CD8-positive, alpha-beta T cell (primary cell): ENCODE measurements at regions of chr9 and their contacts with region 1.

Region 1: DNA sequence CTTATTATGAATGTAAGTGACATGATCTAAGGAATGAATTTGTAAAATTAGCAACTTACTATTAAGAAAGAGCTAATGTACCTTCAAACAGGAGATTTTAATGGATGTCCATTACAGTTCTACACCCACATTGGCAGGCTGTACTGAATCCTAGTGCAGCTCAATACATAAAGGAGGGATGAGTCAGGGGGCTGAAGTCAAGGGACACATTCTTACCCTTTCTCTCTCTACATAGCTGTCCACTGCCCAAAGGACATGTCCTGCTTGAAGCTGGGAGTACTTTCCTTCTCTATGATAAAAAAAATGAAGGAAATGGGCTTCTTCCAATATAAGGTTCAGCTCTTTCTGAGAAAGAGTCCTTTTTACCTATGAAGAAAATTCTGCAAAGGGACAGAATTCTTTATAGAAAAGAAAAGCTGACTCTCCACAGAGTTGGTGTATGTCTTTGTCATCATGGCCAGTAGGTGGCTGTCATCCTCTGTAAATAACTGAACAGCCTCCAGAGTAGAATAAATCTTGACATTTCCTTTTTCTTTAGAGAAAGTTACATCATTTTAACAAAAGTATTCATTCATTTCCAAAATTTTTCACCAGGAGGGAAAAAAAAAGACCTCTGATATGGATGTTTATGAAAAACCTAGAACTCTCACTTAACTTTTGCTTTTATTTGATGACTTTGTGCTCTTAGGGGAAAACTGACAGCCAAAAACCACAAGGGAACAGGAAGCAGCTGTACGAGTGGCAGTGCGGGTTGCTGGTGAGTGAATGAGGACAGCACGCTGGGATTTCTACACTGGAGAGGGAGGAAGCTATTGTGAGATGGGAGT is 13.1 kb upstream of the IFNA14 start:
- DNase-seq: peak in 2 of 9 experiments; percentile 30 to 42
- ATAC-seq: peak; percentile 51
- H3K4me3 ChIP-seq: no peak overlapping the region
- H3K4me3 Mint-ChIP-seq: no peak overlapping the region
- H3K27ac ChIP-seq: no peak overlapping the region
- H3K27ac Mint-ChIP-seq: no peak overlapping the region
- H3K4me1 ChIP-seq: peaks cover 8% of the 10 kb centered on the region
- H3K4me1 Mint-ChIP-seq: peaks cover 5% of the 10 kb centered on the region
- H3K27me3 ChIP-seq: peaks cover 0 to 5% of the 10 kb centered on the region in 2 experiments
- H3K27me3 Mint-ChIP-seq: peaks cover 9% of the 10 kb centered on the region
- CTCF ChIP-seq: peak; percentile 66

Region 2: GRCh38 chr9:21239911-21240310 is 13.0 kb before region 1 on chr9 and contains the start of gene IFNA14:
- CTCF ChIA-PET with region 1: interaction called, 12 read pairs
- POLR2A ChIA-PET with region 1: interaction called, 3 read pairs
- intact Hi-C with region 1: no loop called
- DNase-seq: no peak
- ATAC-seq: no peak
- H3K4me3 ChIP-seq: no peak within 1 kb of the TSS
- H3K4me3 Mint-ChIP-seq: no peak within 1 kb of the TSS
- H3K27ac ChIP-seq: no peak within 1 kb of the TSS
- H3K27ac Mint-ChIP-seq: no peak within 1 kb of the TSS
- H3K4me1 ChIP-seq: no peaks in the 10 kb centered on the region
- H3K4me1 Mint-ChIP-seq: peaks cover 9% of the 10 kb centered on the region
- H3K27me3 ChIP-seq: no peaks in the 10 kb centered on the region
- H3K27me3 Mint-ChIP-seq: peaks cover 16% of the 10 kb centered on the region
- CTCF ChIP-seq: no peak
- total RNA-seq, gene IFNA14: not detected

Region 3: DNA sequence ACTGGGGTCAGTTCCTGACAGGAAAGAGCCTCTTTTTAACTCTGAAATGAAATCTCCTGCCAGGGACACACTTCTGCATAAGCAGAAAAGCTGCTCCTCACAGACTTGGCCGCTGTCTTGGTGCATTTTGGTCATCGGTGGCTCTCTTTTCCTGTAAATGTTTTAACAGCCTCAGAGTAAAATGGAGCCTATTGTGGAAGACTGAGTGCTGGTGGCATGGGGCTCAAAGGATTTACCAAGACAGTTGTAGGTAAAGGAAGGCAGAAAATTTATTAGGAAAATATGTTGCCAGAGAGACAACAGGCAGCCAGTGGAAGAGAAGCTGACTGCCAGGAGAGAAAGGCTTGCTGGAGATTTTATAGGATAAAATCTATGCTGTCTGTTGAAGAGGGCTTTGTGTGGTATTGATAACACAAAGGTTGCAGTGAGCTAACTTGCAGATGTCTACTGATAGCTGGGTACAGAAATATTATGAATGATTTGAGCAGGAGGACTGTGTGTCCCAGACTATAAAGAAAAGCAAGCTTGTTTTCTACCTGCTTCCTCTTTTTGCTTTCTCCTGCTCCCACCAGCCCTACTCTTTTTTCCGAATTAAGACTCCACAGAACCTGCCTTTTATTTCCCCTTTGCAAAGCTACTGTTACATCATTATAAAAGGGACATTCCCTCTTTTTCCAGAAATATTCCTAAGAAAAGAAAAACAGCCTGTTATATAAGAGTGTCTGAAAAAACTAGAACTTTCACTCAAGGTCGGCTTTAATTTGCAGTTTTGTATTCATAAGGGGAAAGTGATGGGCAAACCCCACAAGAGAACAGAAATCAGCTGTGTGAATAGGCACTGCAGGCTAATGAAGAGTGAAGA is 14.8 kb after region 1 on chr9:
- CTCF ChIA-PET with region 1: interaction called, 11 read pairs
- POLR2A ChIA-PET with region 1: no interaction called
- intact Hi-C with region 1: no loop called
- DNase-seq: no peak
- ATAC-seq: no peak
- H3K4me3 ChIP-seq: no peak overlapping the region
- H3K4me3 Mint-ChIP-seq: no peak overlapping the region
- H3K27ac ChIP-seq: no peak overlapping the region
- H3K27ac Mint-ChIP-seq: no peak overlapping the region
- H3K4me1 ChIP-seq: no peaks in the 10 kb centered on the region
- H3K4me1 Mint-ChIP-seq: peaks cover 5% of the 10 kb centered on the region
- H3K27me3 ChIP-seq: no peaks in the 10 kb centered on the region
- H3K27me3 Mint-ChIP-seq: peaks cover 26% of the 10 kb centered on the region
- CTCF ChIP-seq: no peak

Region 4: DNA sequence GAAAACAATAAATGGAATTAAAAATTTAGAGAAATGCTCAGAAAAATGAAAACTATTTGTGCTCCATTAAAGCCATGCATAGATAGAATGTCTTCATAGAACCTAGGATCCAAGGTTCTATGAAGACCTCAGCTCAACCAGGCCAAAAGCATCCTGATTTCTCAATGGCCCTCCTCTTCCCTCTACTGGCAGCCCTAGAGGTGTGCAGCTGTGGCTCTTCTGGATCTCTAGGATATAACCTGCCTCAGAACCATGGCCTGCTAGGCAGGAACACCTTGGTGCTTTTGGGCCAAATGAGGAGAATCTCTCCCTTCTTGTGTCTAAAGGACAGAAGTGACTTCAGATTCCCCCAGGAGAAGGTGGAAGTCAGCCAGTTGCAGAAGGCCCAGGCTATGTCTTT is 202.4 kb after region 1 on chr9:
- CTCF ChIA-PET with region 1: no interaction called
- POLR2A ChIA-PET with region 1: no interaction called
- intact Hi-C with region 1: loop called in 1 of 2 experiments (anchors 10 kb)
- DNase-seq: peak in 4 of 9 experiments; percentile 13 to 62 (median 42)
- ATAC-seq: peak; percentile 94
- H3K4me3 ChIP-seq: no peak overlapping the region
- H3K4me3 Mint-ChIP-seq: no peak overlapping the region
- H3K27ac ChIP-seq: no peak overlapping the region
- H3K27ac Mint-ChIP-seq: no peak overlapping the region
- H3K4me1 ChIP-seq: no peaks in the 10 kb centered on the region
- H3K4me1 Mint-ChIP-seq: no peaks in the 10 kb centered on the region
- H3K27me3 ChIP-seq: no peaks in the 10 kb centered on the region
- H3K27me3 Mint-ChIP-seq: peaks cover 11% of the 10 kb centered on the region
- CTCF ChIP-seq: peak; percentile 52

Region 5: GRCh38 chr9:21597284-21597683 is 344.4 kb after region 1 on chr9:
- CTCF ChIA-PET with region 1: no interaction called
- POLR2A ChIA-PET with region 1: no interaction called
- intact Hi-C with region 1: no loop called
- DNase-seq: no peak
- ATAC-seq: no peak
- H3K4me3 ChIP-seq: no peak overlapping the region
- H3K4me3 Mint-ChIP-seq: no peak overlapping the region
- H3K27ac ChIP-seq: no peak overlapping the region
- H3K27ac Mint-ChIP-seq: no peak overlapping the region
- H3K4me1 ChIP-seq: no peaks in the 10 kb centered on the region
- H3K4me1 Mint-ChIP-seq: peaks cover under 1% of the 10 kb centered on the region
- H3K27me3 ChIP-seq: peaks cover 0 to 12% of the 10 kb centered on the region in 2 experiments
- H3K27me3 Mint-ChIP-seq: peaks cover 5% of the 10 kb centered on the region
- CTCF ChIP-seq: no peak